Activated CD4-positive, alpha-beta T cell treated with anti-CD3 and anti-CD28 coated beads, Interleukin-2, amount 10 ng/mL, durations not matched to agents 24 days and 14 days (primary cell): ENCODE measurements at regions of chr1 and their contacts with region 1.

Region 1: DNA sequence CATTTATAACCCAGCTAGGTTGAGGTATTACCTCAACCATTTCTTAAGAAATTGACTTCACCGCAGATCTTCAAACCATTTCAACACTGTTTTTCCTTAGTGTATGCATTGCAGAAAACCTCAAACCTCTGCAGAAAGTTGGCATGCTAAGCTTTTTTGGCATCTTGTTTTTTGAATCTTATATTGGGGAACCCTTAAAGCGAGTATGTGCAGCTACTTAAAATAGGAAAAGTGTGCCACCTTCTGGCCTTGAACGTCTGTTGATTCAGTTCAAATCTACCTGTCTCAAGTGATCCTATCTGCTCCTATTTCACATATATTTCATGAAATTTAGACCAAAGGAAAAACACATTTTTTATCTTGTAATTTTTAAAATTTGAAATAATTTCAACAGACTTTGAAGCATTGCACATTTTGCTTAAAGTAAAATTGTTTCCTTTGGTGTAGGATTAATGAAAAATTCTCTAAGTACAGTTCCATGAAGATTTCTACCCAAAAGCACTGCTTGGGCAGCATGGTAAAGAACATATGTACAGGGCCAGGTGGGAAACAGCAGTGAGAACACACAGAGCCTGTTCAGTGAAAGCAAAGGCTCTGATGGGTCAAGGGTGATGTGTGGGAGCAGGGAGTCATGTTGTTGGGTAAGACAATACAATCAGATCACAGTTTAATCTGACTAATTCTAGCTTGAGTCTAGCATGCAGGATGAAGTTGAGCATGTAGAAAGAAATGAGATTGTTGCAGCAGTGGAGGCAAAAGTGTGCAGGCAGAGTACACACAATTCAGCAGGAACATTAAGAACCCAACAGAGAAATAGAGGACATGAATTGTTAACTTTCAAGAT is 17.2 kb downstream of the HENMT1 start:
- DNase-seq: peak; percentile 86
- H3K4me3 Mint-ChIP-seq: peak overlapping the region; percentile 6
- H3K27ac Mint-ChIP-seq: peak overlapping the region; percentile 69
- H3K4me1 Mint-ChIP-seq: peaks cover 62% of the 10 kb centered on the region
- H3K27me3 Mint-ChIP-seq: no peaks in the 10 kb centered on the region

Region 2: GRCh38 chr1:107936498-107937481 is 706.9 kb before region 1 on chr1:
- intact Hi-C with region 1: loop called (anchors 10 kb)
- DNase-seq: peak; percentile 68
- H3K4me3 Mint-ChIP-seq: peak overlapping the region; percentile 53
- H3K27ac Mint-ChIP-seq: peak overlapping the region; percentile 87
- H3K4me1 Mint-ChIP-seq: peaks cover 41% of the 10 kb centered on the region
- H3K27me3 Mint-ChIP-seq: no peaks in the 10 kb centered on the region

Region 3: DNA sequence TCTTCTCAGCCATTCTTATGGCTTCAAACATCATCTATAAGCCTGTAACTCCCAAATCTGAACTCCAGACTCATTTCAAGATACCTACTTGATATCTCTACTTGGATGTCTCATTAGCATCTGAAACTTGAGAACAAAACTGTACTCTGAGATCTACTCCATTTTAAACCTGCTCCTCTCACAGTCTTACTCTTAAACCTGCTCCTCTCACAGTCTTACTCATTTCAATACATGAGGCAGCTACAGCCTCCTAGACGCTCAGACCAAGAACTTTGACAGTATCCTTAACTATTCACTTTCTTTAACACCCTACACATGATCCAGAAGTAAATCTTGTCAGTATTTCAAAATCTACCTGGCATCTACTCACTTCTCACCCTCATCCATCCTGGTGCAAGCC is 139.3 kb before region 1 on chr1:
- intact Hi-C with region 1: loop called (anchors 2 kb)
- DNase-seq: no peak
- H3K4me3 Mint-ChIP-seq: no peak overlapping the region
- H3K27ac Mint-ChIP-seq: no peak overlapping the region
- H3K4me1 Mint-ChIP-seq: no peaks in the 10 kb centered on the region
- H3K27me3 Mint-ChIP-seq: peaks cover 40% of the 10 kb centered on the region

Region 4: DNA sequence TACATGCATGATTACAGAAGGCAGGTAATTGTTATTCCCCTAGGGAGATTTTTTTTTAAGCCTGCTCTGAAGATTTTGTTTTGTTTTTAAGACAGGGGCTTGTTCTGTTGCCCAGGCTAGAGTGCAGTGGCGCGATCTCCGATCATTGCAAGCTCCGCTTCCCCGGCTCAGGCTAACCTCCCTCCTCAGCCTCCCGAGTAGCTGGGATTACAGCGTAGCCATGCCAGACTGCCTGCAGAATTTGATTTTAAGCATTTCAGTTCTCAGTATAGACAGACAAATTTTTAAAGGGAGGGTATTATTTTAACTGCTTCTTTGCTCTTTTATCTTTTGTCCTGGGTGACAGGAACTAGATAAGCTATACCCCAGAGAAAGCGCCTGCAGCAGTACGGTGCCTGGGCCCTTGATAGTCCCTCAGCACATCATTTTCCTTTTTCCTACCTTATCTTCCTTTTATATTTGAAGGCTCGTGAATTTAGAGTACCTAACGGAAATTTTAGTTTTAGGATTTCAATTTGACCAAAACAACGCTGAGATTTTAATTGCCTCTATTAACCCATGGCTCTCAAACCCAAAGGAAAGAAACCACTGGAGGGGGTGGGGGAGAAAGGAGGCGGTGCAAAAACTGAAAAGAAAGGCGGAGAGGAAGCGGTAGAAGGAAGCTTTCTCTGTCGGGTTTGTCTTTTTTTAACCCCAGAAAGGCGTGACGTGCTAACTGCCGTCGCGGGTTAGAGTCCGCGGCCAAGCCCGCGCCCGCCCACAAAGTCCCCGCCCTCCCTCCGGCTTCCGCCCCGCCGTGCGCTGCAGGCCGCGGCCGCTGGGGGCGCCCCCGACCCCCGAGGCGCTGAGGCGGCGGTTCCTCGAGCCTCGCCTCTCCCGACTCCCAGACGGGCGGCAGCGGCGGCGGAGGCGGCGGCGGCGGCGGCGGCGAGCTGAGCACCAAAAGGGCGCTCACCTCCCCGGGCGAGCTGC is 84.2 kb before region 1 on chr1 and contains the start of gene EEIG2:
- intact Hi-C with region 1: loop called (anchors 1 kb)
- DNase-seq: peak; percentile 97
- H3K4me3 Mint-ChIP-seq: peak within 1 kb of the TSS; percentile 93
- H3K27ac Mint-ChIP-seq: peak within 1 kb of the TSS; percentile 90
- H3K4me1 Mint-ChIP-seq: peaks cover 30% of the 10 kb centered on the region
- H3K27me3 Mint-ChIP-seq: peaks cover 8% of the 10 kb centered on the region
- total RNA-seq, gene EEIG2: 13.4 and 14.0 TPM in 2 replicates

Region 5: GRCh38 chr1:108590957-108591356 is 52.8 kb before region 1 on chr1:
- intact Hi-C with region 1: loop called (anchors 1 kb)
- DNase-seq: peak; percentile 71
- H3K4me3 Mint-ChIP-seq: no peak overlapping the region
- H3K27ac Mint-ChIP-seq: peak overlapping the region; percentile 43
- H3K4me1 Mint-ChIP-seq: peaks cover 19% of the 10 kb centered on the region
- H3K27me3 Mint-ChIP-seq: no peaks in the 10 kb centered on the region

Region 6: DNA sequence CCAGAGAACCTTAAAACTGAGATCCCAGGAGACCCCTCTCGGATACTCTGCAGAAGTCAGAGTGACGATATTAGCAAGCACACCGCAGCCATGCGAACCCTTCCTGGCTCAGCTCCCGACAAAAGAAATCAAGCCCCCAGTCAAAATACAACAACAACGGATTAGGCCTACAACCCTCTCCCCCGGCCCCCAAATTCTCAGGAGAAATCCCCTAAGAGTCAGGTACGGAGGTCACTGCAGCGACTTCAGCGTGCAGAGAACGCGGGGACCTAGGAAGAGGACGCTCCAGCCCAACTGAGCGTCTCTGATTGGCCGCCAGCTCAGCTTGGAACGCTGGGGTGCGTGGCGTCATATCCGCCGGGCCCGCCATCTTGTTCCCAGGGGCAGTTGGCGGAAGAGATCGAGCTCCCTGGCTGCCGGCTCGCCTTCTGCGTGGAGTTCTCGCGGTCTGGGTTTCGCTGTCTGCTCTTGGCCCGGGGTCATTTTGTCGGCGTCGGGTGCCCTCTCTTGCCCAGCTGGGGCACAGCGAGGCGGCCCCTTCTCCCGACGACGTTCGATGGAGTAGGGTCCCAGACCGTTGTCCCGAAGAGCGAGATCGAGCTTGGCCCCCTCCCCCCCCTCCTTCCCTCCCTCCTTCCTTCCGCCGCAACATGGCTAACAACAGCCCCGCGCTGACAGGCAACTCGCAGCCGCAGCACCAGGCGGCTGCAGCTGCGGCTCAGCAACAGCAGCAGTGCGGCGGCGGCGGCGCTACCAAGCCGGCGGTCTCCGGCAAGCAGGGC is 48.4 kb after region 1 on chr1 and contains the start of gene PRPF38B:
- intact Hi-C with region 1: loop called (anchors 1 kb)
- DNase-seq: peak; percentile 98
- H3K4me3 Mint-ChIP-seq: peak within 1 kb of the TSS; percentile 99
- H3K27ac Mint-ChIP-seq: peak within 1 kb of the TSS; percentile 100
- H3K4me1 Mint-ChIP-seq: peaks cover 26% of the 10 kb centered on the region
- H3K27me3 Mint-ChIP-seq: peaks cover 14% of the 10 kb centered on the region
- total RNA-seq, gene PRPF38B: 89.2 and 90.3 TPM in 2 replicates

Region 7: GRCh38 chr1:108746372-108747205 is 102.9 kb after region 1 on chr1 and contains the start of gene STXBP3:
- intact Hi-C with region 1: loop called (anchors 5 kb)
- DNase-seq: peak; percentile 100
- H3K4me3 Mint-ChIP-seq: peak within 1 kb of the TSS; percentile 97
- H3K27ac Mint-ChIP-seq: peak within 1 kb of the TSS; percentile 97
- H3K4me1 Mint-ChIP-seq: peaks cover 27% of the 10 kb centered on the region
- H3K27me3 Mint-ChIP-seq: peaks cover 1% of the 10 kb centered on the region
- total RNA-seq, gene STXBP3: 41.1 and 48.9 TPM in 2 replicates

Region 8: GRCh38 chr1:108785264-108785663 is 141.6 kb after region 1 on chr1:
- intact Hi-C with region 1: no loop called
- DNase-seq: no peak
- H3K4me3 Mint-ChIP-seq: no peak overlapping the region
- H3K27ac Mint-ChIP-seq: no peak overlapping the region
- H3K4me1 Mint-ChIP-seq: no peaks in the 10 kb centered on the region
- H3K27me3 Mint-ChIP-seq: no peaks in the 10 kb centered on the region